ENCODE measurements at regions of chr3 and their contacts with region 1.

Region 1: GRCh38 chr3:37210230-37210629 is 35.8 kb upstream of the LRRFIP2 start:
- DNase-seq: no peak
- H3K4me3 Mint-ChIP-seq: no peak overlapping the region
- H3K27ac Mint-ChIP-seq: no peak overlapping the region
- H3K4me1 Mint-ChIP-seq: peaks cover 3% of the 10 kb centered on the region
- H3K27me3 Mint-ChIP-seq: peaks cover 1% of the 10 kb centered on the region

Region 2: GRCh38 chr3:36993326-36994283 is 216.6 kb before region 1 on chr3 and contains the start of gene MLH1:
- intact Hi-C with region 1: loop called (anchors 10 kb)
- DNase-seq: peak; percentile 90
- H3K4me3 Mint-ChIP-seq: no peak within 1 kb of the TSS
- H3K27ac Mint-ChIP-seq: no peak within 1 kb of the TSS
- H3K4me1 Mint-ChIP-seq: peaks cover 37% of the 10 kb centered on the region
- H3K27me3 Mint-ChIP-seq: no peaks in the 10 kb centered on the region
- total RNA-seq, gene MLH1: 61.9 and 64.4 TPM in 2 replicates

Region 3: DNA sequence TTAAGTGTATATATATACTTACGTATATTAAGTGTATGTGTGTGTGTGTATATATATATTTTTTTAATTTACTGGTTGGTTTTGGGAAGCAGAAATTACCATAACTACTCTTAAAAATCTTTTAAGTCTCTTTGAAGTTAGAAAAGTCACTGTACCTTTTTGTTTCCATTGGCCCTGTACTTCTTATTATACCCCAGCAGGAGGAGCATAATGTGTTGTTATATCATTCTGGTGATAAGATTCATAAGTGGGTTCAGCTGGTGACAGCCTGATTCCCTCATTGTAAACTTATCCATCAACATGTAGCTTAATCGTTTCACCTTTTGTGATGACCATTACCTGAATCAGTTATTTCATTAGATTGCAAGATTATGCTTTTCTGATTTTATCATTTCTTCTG is 186.1 kb before region 1 on chr3:
- intact Hi-C with region 1: loop called (anchors 1 kb)
- DNase-seq: no peak
- H3K4me3 Mint-ChIP-seq: no peak overlapping the region
- H3K27ac Mint-ChIP-seq: no peak overlapping the region
- H3K4me1 Mint-ChIP-seq: peaks cover 7% of the 10 kb centered on the region
- H3K27me3 Mint-ChIP-seq: no peaks in the 10 kb centered on the region

Region 4: DNA sequence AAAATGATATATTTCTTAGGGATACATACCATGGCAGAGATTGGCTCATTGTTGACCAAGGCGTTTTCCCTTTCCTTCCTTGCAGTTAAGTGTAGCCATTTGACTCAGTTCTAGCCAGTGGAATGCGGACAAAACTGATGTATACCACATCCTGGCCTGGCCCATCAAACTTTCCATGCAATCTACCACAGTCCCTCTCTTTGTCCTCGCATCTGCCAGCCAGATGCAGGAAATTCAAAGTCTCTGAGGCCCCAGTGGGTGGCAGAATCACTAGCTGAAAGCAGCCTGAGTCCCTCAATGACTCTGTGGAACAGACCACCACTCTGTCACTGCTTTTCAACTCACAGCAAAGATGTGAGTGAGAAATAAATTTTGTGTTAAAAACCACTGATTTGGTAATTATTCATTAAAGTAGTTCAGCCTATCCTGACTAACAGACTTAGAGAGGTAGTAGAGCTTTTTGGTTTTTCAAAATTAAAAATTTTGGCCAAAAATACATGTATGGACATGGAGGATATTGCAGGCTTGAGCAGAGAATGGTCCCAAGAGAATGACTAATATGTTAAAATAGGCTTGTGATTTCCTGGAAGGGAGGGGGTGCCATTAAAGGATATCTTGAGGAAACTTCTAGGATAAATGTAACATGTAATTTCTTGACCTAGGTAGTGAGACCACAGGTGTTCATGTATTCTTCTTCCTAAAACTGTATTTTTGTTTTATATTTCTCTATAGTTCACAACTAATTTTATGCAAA is 46.8 kb before region 1 on chr3:
- intact Hi-C with region 1: loop called (anchors 1 kb)
- DNase-seq: no peak
- H3K4me3 Mint-ChIP-seq: peak overlapping the region; percentile 20
- H3K27ac Mint-ChIP-seq: peak overlapping the region; percentile 72
- H3K4me1 Mint-ChIP-seq: peaks cover 30% of the 10 kb centered on the region
- H3K27me3 Mint-ChIP-seq: no peaks in the 10 kb centered on the region

Region 5: DNA sequence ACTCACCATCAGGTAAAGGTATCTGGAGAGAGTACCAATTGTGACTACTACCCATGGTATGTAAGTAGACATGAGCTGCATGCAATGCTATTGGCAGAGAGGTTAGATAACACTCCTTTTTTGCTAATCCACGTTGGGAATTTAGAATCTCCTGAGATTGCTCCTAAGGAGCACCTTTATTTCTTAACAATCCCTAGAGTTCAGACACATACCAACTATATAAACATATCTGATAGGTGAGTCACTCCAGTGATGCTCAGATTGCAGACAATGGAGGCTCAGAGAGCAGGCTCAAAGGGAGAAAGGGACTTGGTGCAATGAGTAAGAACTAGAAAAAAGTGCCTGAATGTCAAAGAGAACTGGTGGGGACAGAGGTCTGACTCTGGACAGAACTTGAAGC is 11.2 kb after region 1 on chr3:
- intact Hi-C with region 1: no loop called
- DNase-seq: no peak
- H3K4me3 Mint-ChIP-seq: no peak overlapping the region
- H3K27ac Mint-ChIP-seq: no peak overlapping the region
- H3K4me1 Mint-ChIP-seq: peaks cover 18% of the 10 kb centered on the region
- H3K27me3 Mint-ChIP-seq: peaks cover 7% of the 10 kb centered on the region

Measured in activated T-helper 2 cell treated with anti-CD3 and anti-CD28 coated beads, Interferon-gamma antibody, Interleukin-2, Interleukin-4, amounts not matched to agents 10 μg/mL and 5 μg/mL and 100 μg/mL, durations not matched to agents 14 hours and 24 hours and 36 hours (primary cell).